ENCODE measurements at regions of chr3 and their contacts with region 1.

Region 1: GRCh38 chr3:107522510-107523288 is at the start of gene BBX:
- DNase-seq: peak; percentile 96
- H3K4me3 ChIP-seq: peak within 1 kb of the TSS; percentile 84 to 95
- H3K27ac ChIP-seq: peak within 1 kb of the TSS; percentile 96 to 98
- H3K4me1 ChIP-seq: peaks cover 5% of the 10 kb centered on the region
- H3K27me3 ChIP-seq: no peaks in the 10 kb centered on the region
- CTCF ChIP-seq: peak in 2 of 4 experiments; percentile 7 to 13
- POLR2A ChIP-seq: peak; percentile 95
- total RNA-seq, gene BBX: 94.7 to 226 TPM

Region 2: GRCh38 chr3:106725566-106725965 is 797.1 kb before region 1 on chr3:
- intact Hi-C with region 1: no loop called
- DNase-seq: no peak
- H3K4me3 ChIP-seq: no peak overlapping the region
- H3K27ac ChIP-seq: peak overlapping the region in 1 of 2 donors; percentile 1
- H3K4me1 ChIP-seq: no peaks in the 10 kb centered on the region
- H3K27me3 ChIP-seq: no peaks in the 10 kb centered on the region
- CTCF ChIP-seq: no peak
- POLR2A ChIP-seq: no peak

Region 3: DNA sequence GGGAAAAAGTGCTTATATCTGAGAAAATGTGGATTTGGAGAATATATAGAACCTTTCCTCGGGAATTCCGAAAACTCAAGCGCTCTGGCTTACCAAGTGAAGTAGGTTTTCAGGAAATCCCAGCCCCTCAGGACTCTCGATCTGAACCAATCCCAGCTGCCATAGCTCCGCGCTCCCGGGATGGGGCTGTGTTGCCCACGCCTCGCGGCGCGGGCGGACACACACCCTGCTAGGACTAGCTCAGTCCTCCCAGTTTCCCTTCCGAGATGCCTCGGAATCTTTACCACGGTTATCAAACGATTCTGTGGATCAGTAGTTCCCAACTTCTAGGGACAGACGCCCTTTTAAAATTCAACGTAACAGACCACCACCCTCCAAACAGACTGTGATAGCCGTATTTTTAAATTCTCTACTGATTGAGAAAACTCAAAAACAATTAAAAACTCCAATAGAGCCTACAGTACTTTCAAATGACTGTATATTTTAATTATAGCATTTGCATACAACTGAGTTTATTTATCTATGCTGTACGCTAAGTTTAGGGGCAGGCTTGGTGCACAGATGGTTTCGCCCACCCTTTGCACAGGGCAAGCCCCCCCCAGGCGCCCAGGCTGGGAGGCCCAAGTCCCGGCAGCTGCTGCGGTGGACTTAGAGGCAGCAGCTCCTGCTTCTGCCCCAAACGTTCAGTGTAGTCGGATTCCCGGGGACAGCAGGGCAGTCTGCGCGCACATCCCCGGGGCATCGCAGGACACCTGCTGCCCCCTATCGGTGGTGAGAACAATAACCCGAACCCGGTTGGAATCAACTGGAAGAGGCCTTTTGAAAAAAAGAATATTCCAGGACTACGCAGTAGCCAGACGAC is 93.1 kb before region 1 on chr3:
- intact Hi-C with region 1: loop called (anchors 2 kb)
- DNase-seq: peak; percentile 69
- H3K4me3 ChIP-seq: peak overlapping the region; percentile 64 to 68
- H3K27ac ChIP-seq: peak overlapping the region; percentile 97 to 98
- H3K4me1 ChIP-seq: no peaks in the 10 kb centered on the region
- H3K27me3 ChIP-seq: no peaks in the 10 kb centered on the region
- CTCF ChIP-seq: peak; percentile 64 to 85 (median 82)
- POLR2A ChIP-seq: no peak

Measured in prostate gland (tissue), 2 donors.